ENCODE measurements at regions of chr6 and their contacts with region 1.

Region 1: DNA sequence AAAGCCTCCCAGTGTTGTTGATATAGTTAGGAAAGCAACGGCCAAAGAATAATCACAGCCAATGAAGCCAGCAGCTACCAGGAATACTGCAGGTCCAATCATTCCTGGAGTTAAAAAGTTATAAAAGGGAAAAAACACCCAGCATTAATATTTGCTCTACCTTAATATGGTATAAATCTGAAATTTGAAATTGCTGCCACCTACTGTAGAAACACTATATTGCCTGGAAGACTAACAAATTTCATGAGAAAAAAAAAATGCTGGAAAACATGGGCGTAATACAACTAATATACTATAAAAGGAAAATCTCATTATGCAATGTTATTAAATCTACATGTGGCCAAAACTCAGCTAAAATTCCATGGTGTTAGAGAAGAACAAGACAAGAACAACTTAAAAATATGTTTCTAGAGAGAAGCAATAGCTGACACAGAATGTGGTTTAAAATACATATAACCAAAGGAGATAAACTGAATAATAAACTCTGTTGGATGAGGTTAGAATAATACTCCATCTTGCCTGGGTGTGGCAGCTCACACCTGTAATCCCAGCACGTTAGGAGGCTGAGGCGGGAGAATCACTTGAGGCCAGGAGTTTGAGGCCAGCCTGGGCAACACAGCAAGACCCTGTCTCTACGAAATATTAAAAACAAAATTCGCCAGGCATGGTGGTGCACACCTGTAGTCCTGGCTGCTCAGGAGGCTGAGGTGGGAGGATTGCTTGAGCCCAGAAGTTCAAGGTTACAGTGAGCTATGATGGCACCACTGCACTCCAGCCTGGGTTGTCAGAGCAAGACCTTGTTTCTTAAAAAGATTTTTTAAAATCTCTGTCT is 43.1 kb downstream of the SLC17A5 start:
- DNase-seq: peak; percentile 44
- CTCF ChIP-seq: peak; percentile 45

Region 2: DNA sequence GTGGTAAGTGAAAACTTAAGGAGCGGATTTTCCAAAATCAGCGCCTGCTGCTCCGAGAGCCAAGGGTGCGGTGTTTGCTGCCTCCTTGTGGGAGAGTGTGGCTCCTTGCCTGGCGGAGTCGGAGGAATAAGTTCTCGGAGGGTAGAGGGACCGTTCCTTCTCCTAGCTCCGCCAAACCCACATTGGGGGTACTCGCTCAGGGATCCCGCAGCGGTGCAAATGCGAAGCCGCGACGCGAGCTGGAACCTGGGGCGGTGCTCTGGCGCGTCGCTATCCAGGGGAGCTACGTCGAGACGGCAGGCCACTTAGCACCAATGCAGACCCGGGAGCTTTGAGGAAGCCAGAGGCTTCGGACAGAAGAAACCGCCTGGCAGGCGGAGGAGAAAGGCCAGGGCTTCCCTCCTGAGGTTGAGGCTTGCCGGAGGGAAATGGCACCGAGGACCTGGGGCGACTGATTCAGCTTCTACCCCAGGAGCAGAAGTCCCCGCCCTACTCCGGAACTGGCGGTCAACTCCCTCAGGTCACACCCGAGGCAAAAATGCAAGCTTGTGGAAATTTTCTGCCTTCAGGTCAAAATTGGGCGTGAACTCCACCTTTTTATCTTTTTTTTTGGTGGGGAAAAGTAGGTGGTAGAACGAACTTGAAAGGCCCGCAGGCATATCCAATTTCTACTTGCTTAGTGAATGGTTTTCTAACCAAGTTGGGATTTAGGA is 221.7 kb before region 1 on chr6:
- CTCF ChIA-PET with region 1: no interaction called
- POLR2A ChIA-PET with region 1: no interaction called
- DNase-seq: peak; percentile 76
- CTCF ChIP-seq: peak; percentile 72

Region 3: DNA sequence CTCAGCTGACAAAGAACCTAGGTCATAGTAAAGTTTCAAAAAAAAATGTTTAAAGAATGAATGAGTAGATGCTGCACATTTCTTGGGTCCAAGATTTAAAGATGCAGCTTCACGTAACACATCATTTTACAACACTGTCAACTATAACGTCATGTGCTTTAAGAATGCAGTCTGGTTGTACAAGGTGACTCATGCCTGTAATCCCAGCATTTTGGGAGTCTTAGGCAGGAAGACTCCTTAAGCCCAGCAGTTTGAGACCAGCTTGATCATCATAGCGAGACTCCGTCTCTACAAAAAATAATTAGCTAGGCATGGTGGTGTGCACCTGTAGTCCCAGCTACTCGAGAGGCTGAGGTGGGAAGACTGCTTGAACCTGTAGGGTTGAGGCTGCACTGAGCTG is 21.2 kb after region 1 on chr6:
- CTCF ChIA-PET with region 1: interaction called, 19 read pairs
- POLR2A ChIA-PET with region 1: no interaction called
- DNase-seq: no peak
- CTCF ChIP-seq: no peak

Region 4: GRCh38 chr6:73653571-73654424 is 43.1 kb after region 1 on chr6 and contains the start of gene SLC17A5:
- CTCF ChIA-PET with region 1: interaction called, 18 read pairs
- POLR2A ChIA-PET with region 1: no interaction called
- DNase-seq: peak; percentile 95
- CTCF ChIP-seq: no peak